ENCODE measurements at regions of chr14 and their contacts with region 1.

Region 1: GRCh38 chr14:49538926-49539325 is 47.3 kb downstream of the RPS29 start:
- DNase-seq: no peak
- H3K4me3 ChIP-seq: no peak overlapping the region
- CTCF ChIP-seq: no peak
- POLR2A ChIP-seq: no peak

Region 2: DNA sequence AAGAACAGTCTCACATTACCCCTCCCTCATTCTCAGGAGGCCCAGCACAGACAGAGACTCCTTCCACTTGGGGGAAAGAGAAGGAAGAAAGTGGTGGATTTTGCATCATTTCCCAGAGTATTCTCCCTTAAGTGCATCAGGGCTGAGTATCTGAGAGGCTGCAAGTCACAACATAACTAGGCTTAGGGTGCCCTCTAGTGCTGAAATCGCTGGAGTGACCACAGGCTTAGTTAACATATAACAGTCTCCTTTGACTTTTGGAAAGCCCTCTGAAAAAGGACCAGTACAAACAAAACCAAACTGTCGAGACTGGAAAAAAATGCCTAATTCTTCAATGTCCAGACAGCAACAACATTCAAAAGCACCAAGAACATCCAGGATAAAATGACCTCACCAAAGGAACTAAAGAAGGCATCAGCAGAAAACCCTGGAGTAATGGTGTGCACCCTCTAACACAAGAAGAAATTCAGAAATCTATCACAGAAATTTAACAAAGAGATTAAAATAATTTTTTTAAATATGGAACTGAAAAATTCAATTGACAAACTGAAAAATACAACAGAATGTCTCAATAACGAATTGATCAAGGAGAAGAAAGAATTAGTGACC is 365.1 kb before region 1 on chr14:
- intact Hi-C with region 1: loop called (anchors 10 kb)
- DNase-seq: peak in 1 of 2 donors; percentile 28
- H3K4me3 ChIP-seq: no peak overlapping the region
- CTCF ChIP-seq: no peak
- POLR2A ChIP-seq: no peak

Measured in lower leg skin (tissue), 4 donors.